A549 (cell line): ENCODE measurements at regions of chr17 and their contacts with region 1.

Region 1: GRCh38 chr17:75827252-75828115 is 16.7 kb downstream of the UNC13D start:
- DNase-seq: peak; percentile 44 to 92
- ATAC-seq: peak; percentile 73 to 86; a peak in 5 of 6 replicates
- H3K4me3 ChIP-seq: no peak overlapping the region
- H3K27ac ChIP-seq: peak overlapping the region in 1 of 2 experiments; percentile 27; a peak in 2 of 6 replicates
- H3K4me1 ChIP-seq: peaks cover 5% of the 10 kb centered on the region; the same call in 1 of the 3 replicates
- CTCF ChIP-seq: peak; percentile 55
- EP300 ChIP-seq: no peak
- POLR2A ChIP-seq: no peak
- RAD21 ChIP-seq: peak; percentile 40 to 45; a peak in 3 of 5 replicates

Region 2: DNA sequence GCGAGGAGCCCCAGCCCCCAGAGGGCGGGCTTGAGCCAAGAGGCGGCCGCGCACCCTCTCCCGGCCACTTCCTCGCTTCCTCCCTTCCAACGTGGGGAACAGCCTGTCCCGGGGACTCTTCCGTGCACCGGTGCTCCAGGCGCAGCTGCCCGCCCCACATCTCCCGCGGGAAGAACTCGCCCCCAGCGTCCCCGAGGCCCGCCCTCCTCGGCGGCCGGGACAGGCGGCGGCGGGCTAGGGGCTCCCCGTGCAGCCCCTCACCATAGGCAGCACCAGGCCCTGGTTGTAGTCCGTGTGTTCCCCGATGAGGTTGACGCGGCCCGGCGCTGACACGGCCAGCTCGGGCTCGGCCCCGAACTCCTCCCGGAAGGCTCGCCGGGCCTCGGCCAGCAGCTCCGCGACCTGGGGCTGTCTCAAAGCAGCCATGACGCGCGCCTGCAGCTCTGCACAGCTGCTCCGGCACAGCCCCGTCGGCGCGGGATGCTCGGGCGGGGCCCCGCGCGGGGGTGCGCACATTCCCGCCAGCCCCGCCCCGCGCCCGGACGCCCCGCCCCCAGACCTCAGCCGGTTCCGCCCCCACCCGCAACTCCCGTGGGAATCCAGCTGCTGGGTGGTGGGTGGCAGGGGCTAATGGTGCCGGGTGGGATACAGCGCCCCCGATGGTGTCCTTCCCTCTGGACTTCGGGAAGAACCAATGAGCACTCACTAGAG is 62.6 kb before region 1 on chr17 and contains the start of gene GALK1:
- CTCF ChIA-PET with region 1: interaction called, 14 read pairs
- POLR2A ChIA-PET with region 1: no interaction called
- DNase-seq: peak; percentile 78 to 81
- ATAC-seq: peak; percentile 89 to 91
- H3K4me3 ChIP-seq: peak within 1 kb of the TSS; percentile 68
- H3K27ac ChIP-seq: peak within 1 kb of the TSS; percentile 83 to 92
- H3K4me1 ChIP-seq: peaks cover 13% of the 10 kb centered on the region
- CTCF ChIP-seq: peak; percentile 65
- EP300 ChIP-seq: no peak
- POLR2A ChIP-seq: peak; percentile 71
- RAD21 ChIP-seq: peak; percentile 59 to 66
- polyA plus RNA-seq, gene GALK1: 20.7 and 21.3 TPM in 2 replicates

Region 3: DNA sequence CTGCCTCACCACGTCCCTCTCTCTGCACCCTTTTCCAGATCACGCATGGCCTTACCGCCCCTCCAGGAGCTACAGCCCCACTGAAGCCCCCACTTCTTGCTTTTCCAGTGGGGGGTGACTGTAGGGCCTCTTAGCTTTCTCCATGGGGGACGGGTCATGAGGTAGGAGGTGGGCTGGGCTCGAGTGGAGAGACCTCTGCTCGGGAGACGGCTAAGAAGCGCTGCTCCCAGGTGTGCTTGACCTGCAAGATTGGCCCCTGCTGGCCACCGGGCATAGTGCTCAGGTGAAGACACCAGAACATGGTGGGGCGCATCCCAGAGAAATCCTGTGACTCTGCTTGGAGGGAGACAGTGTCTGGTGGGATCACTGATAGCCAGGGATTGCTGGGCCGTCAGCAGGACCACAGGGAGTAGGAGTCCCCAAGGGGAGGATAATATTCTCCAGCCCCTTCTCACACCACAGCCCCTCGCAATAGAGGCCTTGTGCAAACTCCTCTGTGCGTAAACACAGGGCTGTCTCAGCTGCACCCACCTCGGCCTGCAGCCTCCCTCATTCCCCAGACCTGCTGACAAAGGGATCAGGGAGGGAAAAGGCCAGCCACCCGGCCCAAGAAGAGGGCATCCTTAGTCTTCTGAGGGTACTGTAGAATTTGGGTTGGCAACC is 53.5 kb before region 1 on chr17:
- CTCF ChIA-PET with region 1: interaction called, 14 read pairs
- POLR2A ChIA-PET with region 1: interaction called, 3 read pairs
- DNase-seq: no peak
- ATAC-seq: peak; percentile 27 to 47
- H3K4me3 ChIP-seq: no peak overlapping the region
- H3K27ac ChIP-seq: no peak overlapping the region
- H3K4me1 ChIP-seq: peaks cover 13% of the 10 kb centered on the region
- CTCF ChIP-seq: no peak
- EP300 ChIP-seq: no peak
- POLR2A ChIP-seq: no peak
- RAD21 ChIP-seq: no peak

Region 4: GRCh38 chr17:75784473-75785015 is 42.9 kb before region 1 on chr17 and contains the start of gene UNK:
- CTCF ChIA-PET with region 1: interaction called, 21 read pairs
- POLR2A ChIA-PET with region 1: interaction called, 20 read pairs
- DNase-seq: peak; percentile 100
- ATAC-seq: peak; percentile 86 to 89
- H3K4me3 ChIP-seq: peak within 1 kb of the TSS; percentile 60
- H3K27ac ChIP-seq: peak within 1 kb of the TSS; percentile 96 to 97
- H3K4me1 ChIP-seq: peaks cover 39% of the 10 kb centered on the region
- CTCF ChIP-seq: no peak
- EP300 ChIP-seq: no peak
- POLR2A ChIP-seq: no peak
- RAD21 ChIP-seq: no peak
- polyA plus RNA-seq, gene UNK: 34.5 and 40.0 TPM in 2 replicates

Region 5: GRCh38 chr17:75793460-75793859 is 34.0 kb before region 1 on chr17:
- CTCF ChIA-PET with region 1: interaction called, 21 read pairs
- POLR2A ChIA-PET with region 1: no interaction called
- DNase-seq: no peak
- ATAC-seq: no peak
- H3K4me3 ChIP-seq: no peak overlapping the region
- H3K27ac ChIP-seq: no peak overlapping the region
- H3K4me1 ChIP-seq: 0 out of 3 replicates have a peak, but pooled peaks cover 3% of the 10 kb centered on the region
- CTCF ChIP-seq: no peak
- EP300 ChIP-seq: no peak
- POLR2A ChIP-seq: no peak
- RAD21 ChIP-seq: no peak

Region 6: DNA sequence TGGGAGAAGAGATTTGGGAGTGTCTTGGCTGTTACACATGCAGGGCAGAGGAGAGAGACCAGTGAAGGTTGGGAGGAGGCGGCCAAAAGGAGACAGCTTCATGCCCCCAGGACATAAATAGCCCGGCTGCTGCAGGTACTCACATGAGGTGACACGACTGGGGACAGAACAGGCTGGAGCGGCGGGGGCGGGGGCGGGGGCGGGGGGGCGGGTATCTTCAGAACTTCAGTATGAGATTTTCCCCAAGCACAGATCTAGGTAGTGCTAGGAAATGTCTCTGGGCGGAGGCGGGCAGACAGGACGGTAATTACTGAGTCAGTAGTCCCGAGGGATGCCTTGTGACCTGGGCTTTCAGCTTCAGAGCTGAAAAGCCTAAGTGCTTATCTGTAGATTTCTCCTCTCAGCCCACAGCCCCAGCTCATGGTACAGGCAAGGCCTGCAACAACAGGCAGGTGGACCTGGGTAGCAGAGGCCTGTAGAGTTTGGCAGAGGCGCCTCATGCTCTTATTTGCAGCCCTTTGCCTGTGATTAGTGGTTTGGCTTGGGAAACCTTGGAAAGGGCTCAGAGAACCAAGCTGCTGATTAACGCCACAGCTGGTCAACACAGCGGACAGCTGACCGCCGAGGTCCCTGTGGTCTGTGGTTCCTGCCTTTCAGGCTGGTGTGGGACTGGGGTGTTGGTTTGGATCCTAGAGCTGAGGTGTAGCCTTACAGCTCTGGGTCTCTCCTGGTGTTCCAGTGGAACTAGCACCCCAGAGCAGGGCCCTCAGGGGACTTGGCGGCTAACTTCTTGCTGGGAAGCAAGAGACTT is 18.4 kb before region 1 on chr17:
- CTCF ChIA-PET with region 1: interaction called, 691 read pairs
- POLR2A ChIA-PET with region 1: no interaction called
- DNase-seq: no peak
- ATAC-seq: peak in 1 of 2 experiments; percentile 13; a peak in 3 of 6 replicates
- H3K4me3 ChIP-seq: no peak overlapping the region
- H3K27ac ChIP-seq: no peak overlapping the region
- H3K4me1 ChIP-seq: no peaks in the 10 kb centered on the region
- CTCF ChIP-seq: no peak
- EP300 ChIP-seq: no peak
- POLR2A ChIP-seq: no peak
- RAD21 ChIP-seq: no peak

Region 7: GRCh38 chr17:75855310-75856081 is 28.0 kb after region 1 on chr17 and contains the start of gene WBP2:
- CTCF ChIA-PET with region 1: interaction called, 691 read pairs
- POLR2A ChIA-PET with region 1: interaction called, 3 read pairs
- DNase-seq: peak; percentile 100
- ATAC-seq: peak; percentile 90 to 95
- H3K4me3 ChIP-seq: peak within 1 kb of the TSS; percentile 58
- H3K27ac ChIP-seq: peak within 1 kb of the TSS; percentile 83 to 91
- H3K4me1 ChIP-seq: peaks cover 19% of the 10 kb centered on the region
- CTCF ChIP-seq: peak; percentile 63
- EP300 ChIP-seq: no peak
- POLR2A ChIP-seq: peak; percentile 95
- RAD21 ChIP-seq: peak in 1 of 2 experiments; percentile 65; a peak in 4 of 5 replicates
- polyA plus RNA-seq, gene WBP2: 35.6 and 39.7 TPM in 2 replicates